Activated CD4-positive, alpha-beta T cell treated with anti-CD3 and anti-CD28 coated beads, Interleukin-2, amount 10 ng/mL, durations not matched to agents 24 days and 14 days (primary cell): ENCODE measurements at regions of chr14 and their contacts with region 1.

Region 1: DNA sequence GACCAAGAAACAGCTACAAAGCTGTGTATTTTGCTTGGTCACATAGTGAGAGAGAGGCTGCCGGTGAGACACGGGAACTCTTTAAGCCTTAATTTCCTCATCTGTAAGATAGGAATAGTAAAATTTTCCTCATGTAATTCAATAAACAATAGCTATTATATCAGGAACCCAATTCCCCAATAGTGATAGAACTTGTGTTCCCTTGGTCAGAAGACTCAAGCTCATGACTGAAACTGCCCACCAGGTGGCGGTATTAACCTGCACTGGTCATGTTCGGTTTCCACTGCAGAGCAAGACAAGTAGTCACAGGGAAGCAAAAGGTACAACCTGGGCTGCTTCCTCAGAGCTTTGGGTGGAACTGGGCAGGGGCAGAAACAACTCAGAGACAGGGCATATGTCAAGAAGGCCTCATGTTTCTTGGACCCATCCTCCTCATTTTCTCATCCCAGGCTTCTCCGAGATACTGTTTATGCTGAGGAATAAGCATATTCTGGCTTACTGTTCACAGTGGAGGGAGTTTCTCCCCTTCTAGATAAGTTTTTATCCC is 4.2 kb upstream of the AJUBA start:
- DNase-seq: peak; percentile 96
- H3K4me3 Mint-ChIP-seq: no peak overlapping the region
- H3K27ac Mint-ChIP-seq: no peak overlapping the region
- H3K4me1 Mint-ChIP-seq: no peaks in the 10 kb centered on the region
- H3K27me3 Mint-ChIP-seq: no peaks in the 10 kb centered on the region

Region 2: GRCh38 chr14:22822571-22823098 is 163.9 kb before region 1 on chr14:
- intact Hi-C with region 1: loop called (anchors 5 kb)
- DNase-seq: peak; percentile 90
- H3K4me3 Mint-ChIP-seq: peak overlapping the region; percentile 71
- H3K27ac Mint-ChIP-seq: no peak overlapping the region
- H3K4me1 Mint-ChIP-seq: peaks cover 33% of the 10 kb centered on the region
- H3K27me3 Mint-ChIP-seq: peaks cover 9% of the 10 kb centered on the region

Region 3: GRCh38 chr14:22973217-22974032 is 13.2 kb before region 1 on chr14:
- intact Hi-C with region 1: loop called (anchors 1 kb)
- DNase-seq: peak; percentile 84
- H3K4me3 Mint-ChIP-seq: no peak overlapping the region
- H3K27ac Mint-ChIP-seq: no peak overlapping the region
- H3K4me1 Mint-ChIP-seq: no peaks in the 10 kb centered on the region
- H3K27me3 Mint-ChIP-seq: peaks cover 11% of the 10 kb centered on the region

Region 4: GRCh38 chr14:23057757-23058653 is 71.4 kb after region 1 on chr14:
- intact Hi-C with region 1: loop called (anchors 1 kb)
- DNase-seq: peak; percentile 96
- H3K4me3 Mint-ChIP-seq: peak overlapping the region; percentile 85
- H3K27ac Mint-ChIP-seq: peak overlapping the region; percentile 57
- H3K4me1 Mint-ChIP-seq: peaks cover 17% of the 10 kb centered on the region
- H3K27me3 Mint-ChIP-seq: peaks cover 8% of the 10 kb centered on the region